Activated CD8-positive, alpha-beta T cell treated with anti-CD3 and anti-CD28 coated beads, Interleukin-2, amount 10 ng/mL, durations not matched to agents 7 days and 5 days (primary cell): ENCODE measurements at regions of chr17 and their contacts with region 1.

Region 1: DNA sequence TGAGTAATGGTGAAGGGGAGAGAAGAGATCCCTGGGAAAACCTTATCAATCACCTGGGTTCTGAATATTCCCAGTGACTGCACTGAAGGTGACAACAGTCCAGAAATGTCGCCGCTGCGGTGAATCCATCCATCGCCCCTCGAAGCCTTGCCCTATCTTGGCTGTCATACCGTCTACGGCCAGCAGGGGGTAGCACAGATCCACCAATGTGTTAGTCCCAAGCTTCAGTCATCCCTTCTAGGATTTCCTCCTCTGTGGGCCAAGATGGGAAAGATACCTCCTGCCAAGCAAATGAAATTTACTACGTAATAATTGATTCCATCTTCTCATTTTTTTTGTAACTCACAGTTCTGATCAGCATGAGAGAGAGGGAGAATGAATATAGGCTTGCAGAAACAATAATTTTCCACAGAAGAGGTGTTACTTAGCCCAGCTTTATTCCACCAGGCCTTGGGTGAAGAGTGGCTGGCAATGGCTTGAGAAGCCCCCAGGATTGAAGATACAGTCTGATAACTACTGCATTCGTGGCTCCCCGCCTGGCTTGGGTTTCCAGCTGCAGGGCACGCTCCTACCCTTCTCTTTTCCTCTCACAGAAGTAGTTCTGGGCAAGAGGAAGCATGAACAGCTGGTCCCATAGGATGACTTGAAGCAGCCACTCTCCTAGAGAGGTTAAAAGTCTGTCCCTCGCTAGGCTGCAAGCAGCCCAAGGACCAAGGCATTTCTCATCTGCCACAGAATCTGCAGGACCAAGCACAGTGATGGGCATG is 2.6 kb upstream of the FMNL1 start:
- DNase-seq: peak; percentile 89
- ATAC-seq: no peak
- H3K4me3 Mint-ChIP-seq: peak overlapping the region; percentile 80
- H3K27ac Mint-ChIP-seq: peak overlapping the region; percentile 86
- H3K4me1 Mint-ChIP-seq: peaks cover 37% of the 10 kb centered on the region
- H3K27me3 Mint-ChIP-seq: no peaks in the 10 kb centered on the region

Region 2: GRCh38 chr17:45197555-45198334 is 21.3 kb before region 1 on chr17:
- CTCF ChIA-PET with region 1: interaction called, 14 read pairs
- POLR2A ChIA-PET with region 1: no interaction called
- DNase-seq: peak; percentile 88
- ATAC-seq: peak; percentile 100
- H3K4me3 Mint-ChIP-seq: no peak overlapping the region
- H3K27ac Mint-ChIP-seq: no peak overlapping the region
- H3K4me1 Mint-ChIP-seq: peaks cover 5% of the 10 kb centered on the region
- H3K27me3 Mint-ChIP-seq: no peaks in the 10 kb centered on the region

Region 3: GRCh38 chr17:45247429-45248131 is 28.5 kb after region 1 on chr17:
- CTCF ChIA-PET with region 1: interaction called, 67 read pairs
- POLR2A ChIA-PET with region 1: interaction called, 132 read pairs
- DNase-seq: peak; percentile 99
- ATAC-seq: peak; percentile 92
- H3K4me3 Mint-ChIP-seq: peak overlapping the region; percentile 91
- H3K27ac Mint-ChIP-seq: peak overlapping the region; percentile 97
- H3K4me1 Mint-ChIP-seq: peaks cover 75% of the 10 kb centered on the region
- H3K27me3 Mint-ChIP-seq: no peaks in the 10 kb centered on the region

Region 4: GRCh38 chr17:45270828-45271418 is 51.8 kb after region 1 on chr17:
- CTCF ChIA-PET with region 1: interaction called, 79 read pairs
- POLR2A ChIA-PET with region 1: interaction called, 5 read pairs
- DNase-seq: peak; percentile 67
- ATAC-seq: peak; percentile 64
- H3K4me3 Mint-ChIP-seq: no peak overlapping the region
- H3K27ac Mint-ChIP-seq: no peak overlapping the region
- H3K4me1 Mint-ChIP-seq: peaks cover 2% of the 10 kb centered on the region
- H3K27me3 Mint-ChIP-seq: no peaks in the 10 kb centered on the region

Region 5: DNA sequence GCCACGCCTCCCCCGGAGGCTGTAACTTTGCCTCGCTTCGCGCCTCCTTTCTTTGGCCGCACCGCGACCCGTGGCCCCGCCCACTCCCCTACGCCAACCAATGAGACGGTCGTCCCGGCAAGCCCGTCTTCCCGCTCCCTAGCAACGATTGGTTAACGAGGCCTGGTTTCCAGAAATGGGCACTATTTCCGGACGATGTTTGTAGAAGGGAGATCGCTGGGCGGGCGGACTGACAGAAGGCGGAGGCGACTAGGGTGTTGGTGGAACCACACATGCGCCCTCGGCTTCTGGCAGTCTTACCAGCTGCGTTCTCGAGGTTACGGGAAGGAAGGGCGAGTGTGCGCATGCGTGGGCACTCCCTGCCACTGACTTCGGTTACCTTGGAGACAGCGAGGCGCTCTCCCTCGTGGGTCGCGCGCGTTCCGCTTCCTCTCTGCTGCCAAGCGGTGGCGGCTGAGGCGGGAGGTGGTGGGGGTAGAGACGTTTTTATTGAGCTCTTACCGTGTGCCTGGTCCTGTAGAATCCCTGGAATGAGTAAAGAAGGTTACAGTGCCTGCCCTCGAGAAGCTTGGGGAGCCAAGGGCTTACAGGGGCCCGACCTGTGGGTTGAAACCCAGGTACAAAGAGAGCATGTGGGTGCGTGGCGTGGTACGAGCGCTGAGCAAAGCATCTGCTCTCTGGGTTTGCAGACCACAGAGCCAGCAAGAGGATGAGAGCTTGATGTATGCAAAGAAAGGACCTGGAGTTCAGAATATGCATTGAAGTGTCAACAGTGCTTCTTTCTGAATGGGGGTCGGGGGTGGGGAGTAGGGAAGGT is 98.2 kb after region 1 on chr17:
- CTCF ChIA-PET with region 1: interaction called, 86 read pairs
- POLR2A ChIA-PET with region 1: interaction called, 71 read pairs
- DNase-seq: peak; percentile 100
- ATAC-seq: peak; percentile 90
- H3K4me3 Mint-ChIP-seq: peak overlapping the region; percentile 83
- H3K27ac Mint-ChIP-seq: peak overlapping the region; percentile 93
- H3K4me1 Mint-ChIP-seq: peaks cover 73% of the 10 kb centered on the region
- H3K27me3 Mint-ChIP-seq: no peaks in the 10 kb centered on the region

Region 6: DNA sequence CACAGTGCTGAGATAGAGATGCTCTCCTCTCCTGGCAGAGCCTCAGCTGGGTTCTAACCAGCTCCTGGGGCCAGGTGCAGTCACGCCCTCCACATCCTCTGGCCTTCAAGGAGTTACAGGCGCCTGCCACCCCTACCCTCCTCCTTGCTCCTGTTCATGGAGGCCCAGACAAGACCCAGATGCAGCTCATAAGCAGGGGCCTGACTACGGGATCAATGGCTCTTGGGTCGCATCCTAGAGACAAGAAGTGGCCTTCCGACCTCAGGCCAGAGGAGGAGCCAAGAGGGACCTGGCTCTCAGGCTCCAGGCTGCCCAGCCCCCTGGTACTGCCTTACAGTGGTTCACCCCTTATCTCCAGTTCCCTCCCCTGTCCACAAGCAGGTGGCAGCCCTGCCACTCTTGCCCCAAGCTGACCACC is 190.6 kb after region 1 on chr17:
- CTCF ChIA-PET with region 1: interaction called, 10 read pairs
- POLR2A ChIA-PET with region 1: no interaction called
- DNase-seq: no peak
- ATAC-seq: peak; percentile 42
- H3K4me3 Mint-ChIP-seq: peak overlapping the region; percentile 99
- H3K27ac Mint-ChIP-seq: peak overlapping the region; percentile 98
- H3K4me1 Mint-ChIP-seq: peaks cover 56% of the 10 kb centered on the region
- H3K27me3 Mint-ChIP-seq: no peaks in the 10 kb centered on the region